Adrenal gland (tissue), 19 donors: ENCODE measurements at regions of chr1 and their contacts with region 1.

Region 1: GRCh38 chr1:27662707-27663393 is 9.1 kb downstream of the IFI6 start:
- DNase-seq: peak; percentile 69 to 95 (median 85)
- H3K4me3 ChIP-seq: no peak overlapping the region
- H3K27ac ChIP-seq: peak overlapping the region in 1 of 5 donors; percentile 38
- H3K4me1 ChIP-seq: peaks cover 5 to 14% of the 10 kb centered on the region in 2 donors
- H3K27me3 ChIP-seq: no peaks in the 10 kb centered on the region
- CTCF ChIP-seq: peak; percentile 86 to 98 (median 96)
- POLR2A ChIP-seq: no peak

Region 2: GRCh38 chr1:27392096-27392777 is 270.6 kb before region 1 on chr1 and contains the start of gene GPR3:
- intact Hi-C with region 1: loop called (anchors 10 kb)
- DNase-seq: peak; percentile 87 to 96 (median 93)
- H3K4me3 ChIP-seq: peak within 1 kb of the TSS in 1 of 4 donors; percentile 60
- H3K27ac ChIP-seq: peak within 1 kb of the TSS in 3 of 5 donors; percentile 14 to 76 (median 57)
- H3K4me1 ChIP-seq: peaks cover 11 to 16% of the 10 kb centered on the region in 2 donors
- H3K27me3 ChIP-seq: no peaks in the 10 kb centered on the region
- CTCF ChIP-seq: peak in 4 of 6 experiments; percentile 24 to 39 (median 36)
- POLR2A ChIP-seq: peak in 1 of 2 donors; percentile 31
- total RNA-seq, gene GPR3: 0.17 to 2.0 (median 0.66) TPM in 4 of 9 donors, not detected in the others

Region 3: DNA sequence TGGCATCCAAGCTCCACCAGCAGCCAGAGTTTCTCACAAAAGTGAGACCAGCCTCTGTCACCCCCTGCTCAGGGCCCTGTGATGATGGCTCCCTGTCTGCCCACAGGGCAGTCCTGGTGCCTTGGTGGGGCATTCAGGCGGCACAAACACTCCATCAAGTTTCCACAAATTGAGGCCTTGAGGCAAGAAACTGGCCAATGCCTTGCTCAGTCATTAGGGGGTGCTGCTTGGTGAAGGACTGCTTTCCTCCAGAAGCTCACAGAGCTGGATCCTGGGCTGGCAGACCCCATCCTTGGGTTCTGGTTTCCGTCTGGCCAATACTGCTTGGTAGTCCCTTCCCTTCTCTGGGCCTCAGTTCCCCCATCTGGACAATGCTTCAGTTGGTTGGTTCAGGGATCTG is 46.4 kb before region 1 on chr1:
- intact Hi-C with region 1: loop called in 1 of 2 experiments (anchors 2 kb)
- DNase-seq: no peak
- H3K4me3 ChIP-seq: no peak overlapping the region
- H3K27ac ChIP-seq: no peak overlapping the region
- H3K4me1 ChIP-seq: peaks cover 6% of the 10 kb centered on the region in 2 donors
- H3K27me3 ChIP-seq: no peaks in the 10 kb centered on the region
- CTCF ChIP-seq: no peak
- POLR2A ChIP-seq: no peak

Region 4: GRCh38 chr1:27807385-27807784 is 144.5 kb after region 1 on chr1:
- intact Hi-C with region 1: no loop called
- DNase-seq: no peak
- H3K4me3 ChIP-seq: no peak overlapping the region
- H3K27ac ChIP-seq: no peak overlapping the region
- H3K4me1 ChIP-seq: no peaks in the 10 kb centered on the region
- H3K27me3 ChIP-seq: no peaks in the 10 kb centered on the region
- CTCF ChIP-seq: no peak
- POLR2A ChIP-seq: no peak